ENCODE measurements at regions of chr1 and their contacts with region 1.

Region 1: DNA sequence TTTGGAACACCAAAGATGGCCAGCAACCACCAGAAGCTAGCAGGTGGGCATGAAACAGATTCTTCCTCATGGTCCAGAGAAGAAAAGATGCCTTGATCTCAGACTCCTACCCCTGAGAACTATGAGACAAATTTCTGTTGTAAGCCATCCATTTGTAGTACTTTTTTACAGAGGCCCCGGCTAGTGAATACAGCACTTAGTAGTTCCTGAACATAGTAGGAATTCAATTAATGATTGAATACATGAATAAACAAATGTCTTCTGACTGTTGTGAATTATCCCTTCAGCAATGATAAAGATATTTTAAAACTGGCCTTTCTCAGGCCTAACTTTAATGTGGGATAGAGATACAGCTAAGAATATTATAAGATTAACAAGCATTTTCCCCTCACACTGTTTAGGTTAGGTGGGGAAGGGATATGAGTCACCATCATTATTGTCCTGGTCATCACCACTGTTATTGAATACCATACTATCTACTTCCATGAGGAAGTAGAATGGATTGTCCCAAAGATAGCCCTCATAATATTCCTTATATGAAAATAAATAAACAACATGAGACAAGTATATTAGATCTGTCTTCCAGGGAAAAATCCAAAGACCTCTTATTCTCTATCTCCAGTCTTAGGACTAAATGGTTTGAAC is 51.4 kb downstream of the ADCY10 start:
- DNase-seq: no peak
- ATAC-seq: no peak
- H3K4me3 ChIP-seq: no peak overlapping the region
- H3K27ac ChIP-seq: no peak overlapping the region
- H3K4me1 ChIP-seq: no peaks in the 10 kb centered on the region
- H3K27me3 ChIP-seq: no peaks in the 10 kb centered on the region
- CTCF ChIP-seq: no peak

Region 2: DNA sequence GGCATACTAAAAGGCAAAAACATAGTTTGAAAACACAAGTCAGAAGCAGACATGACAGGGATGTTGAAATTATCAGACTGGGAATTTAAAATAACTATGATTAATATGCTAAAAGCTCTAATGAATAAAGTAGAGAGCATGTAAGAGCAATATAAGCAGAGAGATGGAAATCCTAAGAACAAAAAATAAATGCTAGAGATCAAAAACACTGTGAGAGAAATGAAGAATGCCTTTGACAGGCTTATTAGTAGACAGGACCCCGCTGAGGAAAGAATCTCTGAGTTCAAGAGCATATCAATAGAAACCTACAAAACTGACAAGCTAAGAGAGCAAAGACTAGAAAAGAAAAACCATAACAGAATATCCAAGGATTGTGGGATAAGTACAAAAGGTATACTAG is 46.9 kb before region 1 on chr1:
- CTCF ChIA-PET with region 1: no interaction called
- POLR2A ChIA-PET with region 1: interaction called, 10 read pairs
- in situ Hi-C with region 1: no loop called
- intact Hi-C with region 1: no loop called
- DNase-seq: no peak
- ATAC-seq: no peak
- H3K4me3 ChIP-seq: no peak overlapping the region
- H3K27ac ChIP-seq: no peak overlapping the region
- H3K4me1 ChIP-seq: no peaks in the 10 kb centered on the region
- H3K27me3 ChIP-seq: no peaks in the 10 kb centered on the region
- CTCF ChIP-seq: no peak

Region 3: GRCh38 chr1:168032029-168032428 is 169.5 kb after region 1 on chr1:
- CTCF ChIA-PET with region 1: no interaction called
- POLR2A ChIA-PET with region 1: interaction called, 12 read pairs
- in situ Hi-C with region 1: no loop called
- intact Hi-C with region 1: no loop called
- DNase-seq: no peak
- ATAC-seq: no peak
- H3K4me3 ChIP-seq: no peak overlapping the region
- H3K27ac ChIP-seq: no peak overlapping the region
- H3K4me1 ChIP-seq: no peaks in the 10 kb centered on the region
- H3K27me3 ChIP-seq: no peaks in the 10 kb centered on the region
- CTCF ChIP-seq: no peak

Measured in Panc1 (cell line).